Mammary epithelial cell (primary cell): ENCODE measurements at regions of chr15 and their contacts with region 1.

Region 1: GRCh38 chr15:99409097-99409473 is 156.7 kb upstream of the MEF2A start:
- DNase-seq: peak; percentile 58
- H3K4me3 ChIP-seq: no peak overlapping the region
- H3K27ac ChIP-seq: no peak overlapping the region
- H3K4me1 ChIP-seq: peaks cover 14% of the 10 kb centered on the region
- H3K27me3 ChIP-seq: no peaks in the 10 kb centered on the region
- CTCF ChIP-seq: peak; percentile 57 to 92

Region 2: GRCh38 chr15:99454941-99455788 is 46.1 kb after region 1 on chr15:
- CTCF ChIA-PET with region 1: no interaction called
- dilution Hi-C with region 1: no loop called
- in situ Hi-C with region 1: no loop called
- intact Hi-C with region 1: no loop called
- DNase-seq: peak; percentile 99
- H3K4me3 ChIP-seq: no peak overlapping the region
- H3K27ac ChIP-seq: peak overlapping the region; percentile 93
- H3K4me1 ChIP-seq: peaks cover 39% of the 10 kb centered on the region
- H3K27me3 ChIP-seq: no peaks in the 10 kb centered on the region
- CTCF ChIP-seq: no peak

Region 3: DNA sequence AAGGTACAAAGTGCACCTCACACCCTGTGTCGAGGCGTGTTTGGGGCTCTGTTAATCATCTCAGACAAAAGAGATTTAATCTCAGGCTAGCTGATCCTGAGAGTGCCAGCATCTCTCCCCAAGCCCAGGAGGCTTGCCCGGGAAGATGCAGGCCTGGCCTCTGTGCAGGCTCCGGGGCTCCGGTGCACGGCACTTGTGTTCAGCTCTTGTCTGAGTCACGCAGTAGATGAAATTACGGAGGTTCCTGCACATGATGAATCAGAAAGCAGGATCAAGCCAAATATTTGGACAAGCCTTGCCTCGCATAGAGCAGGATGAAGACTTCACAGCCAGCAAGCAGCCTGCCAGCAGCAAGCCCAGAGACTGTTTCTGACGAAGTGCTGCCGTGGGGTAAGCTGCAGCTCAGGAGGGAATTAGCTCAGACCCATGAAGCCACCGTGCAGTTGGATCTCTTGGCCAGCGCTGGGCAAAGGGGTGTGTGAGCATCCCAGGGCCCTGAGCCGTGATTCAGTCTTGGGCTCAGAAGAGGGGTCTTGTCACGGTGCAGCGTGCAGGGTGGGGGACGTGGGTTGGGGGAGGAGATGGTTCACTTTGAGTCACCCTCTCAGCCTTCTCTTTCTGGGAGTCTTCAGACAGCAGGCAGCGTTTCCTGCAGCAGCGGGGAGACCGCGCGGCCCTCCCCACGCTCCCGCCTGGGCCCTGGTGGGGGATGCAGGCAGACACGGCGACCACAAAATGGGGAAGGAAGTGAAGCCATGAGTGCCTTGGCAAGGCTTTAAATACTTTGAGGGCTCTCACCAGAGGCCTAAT is 67.5 kb after region 1 on chr15:
- CTCF ChIA-PET with region 1: no interaction called
- dilution Hi-C with region 1: no loop called
- in situ Hi-C with region 1: no loop called
- intact Hi-C with region 1: loop called (anchors 2 kb)
- DNase-seq: peak; percentile 98
- H3K4me3 ChIP-seq: no peak overlapping the region
- H3K27ac ChIP-seq: peak overlapping the region; percentile 23
- H3K4me1 ChIP-seq: peaks cover 25% of the 10 kb centered on the region
- H3K27me3 ChIP-seq: no peaks in the 10 kb centered on the region
- CTCF ChIP-seq: no peak

Region 4: GRCh38 chr15:99511866-99512661 is 103.0 kb after region 1 on chr15:
- CTCF ChIA-PET with region 1: no interaction called
- dilution Hi-C with region 1: no loop called
- in situ Hi-C with region 1: no loop called
- intact Hi-C with region 1: loop called (anchors 5 kb)
- DNase-seq: no peak
- H3K4me3 ChIP-seq: no peak overlapping the region
- H3K27ac ChIP-seq: no peak overlapping the region
- H3K4me1 ChIP-seq: peaks cover 7% of the 10 kb centered on the region
- H3K27me3 ChIP-seq: no peaks in the 10 kb centered on the region
- CTCF ChIP-seq: no peak

Region 5: DNA sequence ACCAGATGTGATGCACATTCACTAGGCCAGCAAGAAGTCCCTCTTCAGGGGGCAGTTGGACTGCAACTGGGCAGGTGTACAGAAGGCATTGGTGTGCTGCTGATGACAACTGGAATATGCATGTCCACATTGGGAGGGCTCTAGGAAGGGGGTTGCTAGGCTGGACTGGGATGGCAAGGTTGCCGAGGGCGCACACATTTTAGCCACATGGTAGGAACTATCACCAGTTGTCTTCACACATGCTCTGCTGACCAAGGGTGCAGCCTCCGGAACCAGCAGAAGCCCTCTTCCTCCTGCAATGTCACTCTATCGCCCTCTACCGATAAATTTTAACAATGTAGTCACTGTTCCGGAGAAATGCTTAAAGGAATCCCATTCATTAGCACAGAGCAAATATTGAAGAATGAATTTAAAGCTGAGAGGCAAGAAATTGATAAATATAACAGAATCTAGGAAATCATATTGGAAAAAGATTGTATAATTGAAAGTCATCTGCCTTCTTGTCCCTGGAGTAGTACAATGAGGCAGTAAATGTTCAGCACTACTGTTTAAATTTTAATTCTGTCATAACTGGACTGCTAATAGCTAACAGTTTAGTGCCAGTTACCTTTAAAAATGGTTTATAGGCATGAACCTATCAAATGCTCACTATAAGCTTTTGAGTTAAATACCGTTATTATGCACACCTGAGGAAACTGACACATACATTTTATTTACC is 346.8 kb after region 1 on chr15:
- CTCF ChIA-PET with region 1: no interaction called
- dilution Hi-C with region 1: no loop called
- in situ Hi-C with region 1: no loop called
- intact Hi-C with region 1: loop called (anchors 2 kb)
- DNase-seq: peak; percentile 52
- H3K4me3 ChIP-seq: no peak overlapping the region
- H3K27ac ChIP-seq: no peak overlapping the region
- H3K4me1 ChIP-seq: no peaks in the 10 kb centered on the region
- H3K27me3 ChIP-seq: no peaks in the 10 kb centered on the region
- CTCF ChIP-seq: peak; percentile 74 to 87